ENCODE measurements at regions of chr11 and their contacts with region 1.

Region 1: GRCh38 chr11:68383976-68384501 is 71.6 kb downstream of the LRP5 start:
- DNase-seq: no peak
- ATAC-seq: peak; percentile 38
- H3K4me3 ChIP-seq: no peak overlapping the region
- H3K27ac ChIP-seq: no peak overlapping the region
- H3K4me1 ChIP-seq: peaks cover 53% of the 10 kb centered on the region
- H3K27me3 ChIP-seq: no peaks in the 10 kb centered on the region
- CTCF ChIP-seq: peak; percentile 92

Region 2: DNA sequence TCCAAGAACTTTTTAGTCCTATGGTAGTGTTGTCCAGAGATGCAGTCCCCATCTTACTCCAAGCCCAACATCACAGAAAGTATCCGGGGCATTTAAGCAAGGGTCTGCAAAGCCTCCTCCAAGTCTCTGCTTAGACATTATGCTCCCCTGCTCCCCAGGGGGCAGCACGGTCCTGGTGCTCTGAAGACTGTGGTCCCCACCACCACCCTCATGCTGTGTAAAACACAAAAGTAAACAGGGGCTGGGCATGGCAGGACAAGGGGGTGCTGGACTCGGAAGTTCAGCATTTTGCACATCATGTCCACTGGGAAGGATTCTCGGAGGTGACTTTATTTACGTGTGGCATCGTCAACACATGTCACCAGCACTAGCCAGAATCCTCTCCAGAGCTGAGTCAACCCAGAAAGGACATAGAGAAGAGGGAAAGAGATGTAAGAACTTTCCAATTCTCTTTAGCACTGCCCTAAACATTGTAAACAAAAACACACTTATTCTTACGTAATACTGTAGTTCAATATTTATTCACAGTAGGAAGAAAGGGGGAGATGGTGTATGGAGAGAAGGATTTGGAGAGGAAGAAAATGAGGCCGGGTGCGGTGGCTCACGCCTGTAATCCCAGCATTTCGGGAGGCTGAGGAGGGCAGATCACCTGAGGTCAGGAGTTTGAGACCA is 307.5 kb before region 1 on chr11:
- intact Hi-C with region 1: no loop called
- DNase-seq: no peak
- ATAC-seq: peak; percentile 74
- H3K4me3 ChIP-seq: no peak overlapping the region
- H3K27ac ChIP-seq: no peak overlapping the region
- H3K4me1 ChIP-seq: peaks cover 5% of the 10 kb centered on the region
- H3K27me3 ChIP-seq: no peaks in the 10 kb centered on the region
- CTCF ChIP-seq: peak; percentile 34

Region 3: GRCh38 chr11:68312117-68312779 is 71.8 kb before region 1 on chr11 and contains the start of gene LRP5:
- intact Hi-C with region 1: loop called (anchors 10 kb)
- DNase-seq: peak; percentile 71
- ATAC-seq: peak; percentile 55
- H3K4me3 ChIP-seq: peak within 1 kb of the TSS; percentile 68
- H3K27ac ChIP-seq: peak within 1 kb of the TSS; percentile 78
- H3K4me1 ChIP-seq: peaks cover 38% of the 10 kb centered on the region
- H3K27me3 ChIP-seq: no peaks in the 10 kb centered on the region
- CTCF ChIP-seq: no peak
- total RNA-seq, gene LRP5: 101 TPM

Region 4: GRCh38 chr11:68459886-68460740 is 76.1 kb after region 1 on chr11:
- intact Hi-C with region 1: no loop called
- DNase-seq: peak; percentile 97
- ATAC-seq: peak; percentile 96
- H3K4me3 ChIP-seq: peak overlapping the region; percentile 84
- H3K27ac ChIP-seq: peak overlapping the region; percentile 96
- H3K4me1 ChIP-seq: peaks cover 41% of the 10 kb centered on the region
- H3K27me3 ChIP-seq: no peaks in the 10 kb centered on the region
- CTCF ChIP-seq: no peak

Region 5: GRCh38 chr11:68506908-68507307 is 122.9 kb after region 1 on chr11:
- intact Hi-C with region 1: no loop called
- DNase-seq: no peak
- ATAC-seq: no peak
- H3K4me3 ChIP-seq: no peak overlapping the region
- H3K27ac ChIP-seq: no peak overlapping the region
- H3K4me1 ChIP-seq: peaks cover 58% of the 10 kb centered on the region
- H3K27me3 ChIP-seq: no peaks in the 10 kb centered on the region
- CTCF ChIP-seq: no peak

Measured in upper lobe of right lung (tissue), 1 donor.